Activated T-helper 1 cell treated with anti-CD3 and anti-CD28 coated beads, Interleukin-12 subunit alpha, Interleukin-12 subunit beta, Interleukin-2, Interleukin-4 antibody, amounts not matched to agents 30 ng/mL and 10 ng/mL and 1 ng/mL, durations not matched to agents 14 hours and 24 hours and 36 hours (primary cell): ENCODE measurements at regions of chr15 and their contacts with region 1.

Region 1: GRCh38 chr15:56918046-56918938 is at the start of gene TCF12:
- DNase-seq: peak; percentile 87
- H3K4me3 Mint-ChIP-seq: peak within 1 kb of the TSS; percentile 82
- H3K27ac Mint-ChIP-seq: peak within 1 kb of the TSS; percentile 63
- H3K4me1 Mint-ChIP-seq: peaks cover 39% of the 10 kb centered on the region
- H3K27me3 Mint-ChIP-seq: no peaks in the 10 kb centered on the region
- total RNA-seq, gene TCF12: 85.7 and 89.2 TPM in 2 replicates

Region 2: DNA sequence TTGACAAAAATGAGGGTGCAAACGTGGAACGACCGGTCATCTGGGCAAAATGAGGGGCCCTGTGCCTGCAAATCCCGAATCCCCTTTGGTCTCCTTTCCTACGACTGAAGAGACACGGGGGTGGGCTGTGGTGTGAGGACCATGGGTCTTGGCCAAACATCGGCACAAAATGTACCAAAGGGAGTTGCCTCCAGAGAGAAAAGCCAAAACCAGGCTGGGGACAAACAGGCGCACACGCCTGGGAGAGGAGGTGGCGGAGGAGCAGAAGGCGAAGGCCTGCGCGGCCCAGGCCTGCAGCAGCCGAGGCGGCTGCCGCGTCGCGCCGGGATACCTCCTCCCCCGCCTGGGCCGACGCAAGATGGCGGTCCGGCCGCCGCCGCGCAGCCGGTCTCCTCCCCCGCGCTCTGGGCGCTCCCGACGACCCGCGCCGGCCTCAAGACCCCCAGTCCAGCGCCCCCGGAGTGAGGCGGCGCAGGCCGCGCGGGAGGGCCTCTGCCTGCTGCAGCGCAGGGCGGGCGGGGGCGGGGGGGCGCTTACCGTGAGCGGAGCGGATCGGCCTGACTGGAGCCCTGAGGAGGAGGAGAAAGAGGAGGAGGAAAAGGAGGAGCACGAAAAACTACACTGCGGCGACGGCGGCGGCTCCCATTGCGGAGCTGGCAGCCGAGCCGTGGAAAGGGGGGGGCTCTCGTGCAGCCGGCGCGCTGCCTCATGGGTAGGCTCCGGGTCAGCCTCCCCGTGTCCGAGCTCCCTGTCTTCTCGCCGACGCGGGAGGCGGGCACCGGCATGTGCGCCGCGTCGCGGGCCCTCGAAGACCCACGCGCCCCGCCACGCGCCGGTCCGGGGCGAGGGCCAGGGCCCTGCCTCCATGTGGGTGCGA is 185.1 kb before region 1 on chr15 and contains the start of gene ZNF280D:
- intact Hi-C with region 1: loop called (anchors 1 kb)
- DNase-seq: peak; percentile 77
- H3K4me3 Mint-ChIP-seq: peak within 1 kb of the TSS; percentile 95
- H3K27ac Mint-ChIP-seq: peak within 1 kb of the TSS; percentile 99
- H3K4me1 Mint-ChIP-seq: peaks cover 47% of the 10 kb centered on the region
- H3K27me3 Mint-ChIP-seq: peaks cover 3% of the 10 kb centered on the region
- total RNA-seq, gene ZNF280D: 29.9 and 30.5 TPM in 2 replicates

Region 3: DNA sequence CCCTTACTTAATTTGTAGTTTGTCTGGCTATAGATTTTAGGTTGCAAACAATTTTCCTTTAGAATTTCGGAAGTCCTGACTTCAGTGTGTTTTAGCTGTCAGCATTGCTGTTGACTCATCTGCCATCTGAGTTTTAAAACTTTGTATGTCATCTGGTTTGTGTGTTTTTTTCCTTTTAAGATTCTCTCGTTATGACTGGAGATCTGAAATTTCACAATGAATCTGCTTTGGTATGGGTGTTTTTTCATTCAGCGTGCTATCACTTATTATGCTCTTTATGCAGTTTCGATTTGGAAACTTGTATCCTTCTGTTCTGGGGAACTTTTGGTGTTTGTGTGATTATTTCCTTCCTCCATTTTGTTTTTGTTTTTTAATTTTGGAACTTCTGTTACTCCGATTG is 131.3 kb before region 1 on chr15:
- intact Hi-C with region 1: loop called (anchors 5 kb)
- DNase-seq: no peak
- H3K4me3 Mint-ChIP-seq: peak overlapping the region; percentile 9
- H3K27ac Mint-ChIP-seq: peak overlapping the region; percentile 70
- H3K4me1 Mint-ChIP-seq: peaks cover 17% of the 10 kb centered on the region
- H3K27me3 Mint-ChIP-seq: no peaks in the 10 kb centered on the region

Region 4: DNA sequence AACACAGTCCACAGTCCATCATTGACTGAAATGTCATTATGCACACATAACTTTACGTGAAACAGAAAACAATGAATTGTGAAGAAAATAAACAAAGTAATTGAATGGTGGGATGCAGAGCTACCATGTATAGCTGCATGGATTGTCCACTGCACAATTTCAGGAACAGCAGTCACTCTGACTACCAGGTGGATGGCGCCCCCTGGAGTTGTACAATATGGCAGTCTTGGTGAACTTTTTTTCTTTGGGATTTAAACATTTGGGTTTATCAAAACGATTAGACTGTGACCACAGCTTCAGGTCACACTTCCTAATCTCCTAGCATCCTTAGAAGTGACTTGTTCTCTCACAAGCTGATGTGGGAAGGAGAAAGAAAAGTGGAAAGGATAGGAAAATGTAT is 48.7 kb before region 1 on chr15:
- intact Hi-C with region 1: no loop called
- DNase-seq: peak; percentile 8
- H3K4me3 Mint-ChIP-seq: no peak overlapping the region
- H3K27ac Mint-ChIP-seq: no peak overlapping the region
- H3K4me1 Mint-ChIP-seq: no peaks in the 10 kb centered on the region
- H3K27me3 Mint-ChIP-seq: peaks cover 12% of the 10 kb centered on the region

Region 5: GRCh38 chr15:56964182-56964581 is 45.9 kb after region 1 on chr15:
- intact Hi-C with region 1: loop called (anchors 2 kb)
- DNase-seq: no peak
- H3K4me3 Mint-ChIP-seq: no peak overlapping the region
- H3K27ac Mint-ChIP-seq: peak overlapping the region; percentile 32
- H3K4me1 Mint-ChIP-seq: peaks cover 26% of the 10 kb centered on the region
- H3K27me3 Mint-ChIP-seq: no peaks in the 10 kb centered on the region

Region 6: GRCh38 chr15:57138349-57138788 is 220.1 kb after region 1 on chr15:
- intact Hi-C with region 1: loop called (anchors 1 kb)
- DNase-seq: no peak
- H3K4me3 Mint-ChIP-seq: no peak overlapping the region
- H3K27ac Mint-ChIP-seq: no peak overlapping the region
- H3K4me1 Mint-ChIP-seq: peaks cover 31% of the 10 kb centered on the region
- H3K27me3 Mint-ChIP-seq: no peaks in the 10 kb centered on the region

Region 7: DNA sequence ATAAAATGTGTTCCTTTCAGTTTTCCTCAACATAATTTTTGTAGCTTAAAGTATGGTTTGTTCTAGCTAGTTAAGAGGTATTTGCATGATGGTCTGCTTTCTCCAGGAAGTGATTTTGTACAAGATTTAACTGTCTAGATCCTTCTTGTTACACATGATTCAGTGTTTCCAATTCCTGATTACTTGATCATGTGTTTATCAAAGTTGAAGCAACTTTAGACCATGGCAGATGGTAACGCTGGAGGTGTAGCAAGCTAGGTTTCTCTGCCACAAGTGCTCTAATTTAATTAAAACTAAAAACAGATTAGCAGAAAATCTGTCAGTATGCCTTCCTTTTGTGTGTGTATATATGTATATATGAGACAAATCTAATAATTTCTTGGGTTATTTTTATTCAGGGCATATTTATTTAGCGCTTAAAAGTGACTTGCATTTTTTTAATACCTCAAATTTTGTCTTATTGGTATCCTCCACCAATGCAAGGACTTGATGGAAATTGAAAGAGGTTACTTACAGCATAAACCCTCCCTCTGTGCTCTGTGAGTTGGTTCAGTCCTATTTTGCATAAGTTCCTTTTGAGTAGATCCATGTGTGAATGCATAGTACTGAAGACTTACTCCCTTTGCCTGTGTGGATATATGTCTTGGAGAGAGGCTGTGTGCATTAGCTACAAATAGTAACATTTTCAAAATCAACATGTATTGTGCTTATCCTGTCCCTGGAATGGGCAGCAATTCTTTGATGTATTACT is 300.7 kb after region 1 on chr15:
- intact Hi-C with region 1: loop called (anchors 5 kb)
- DNase-seq: no peak
- H3K4me3 Mint-ChIP-seq: no peak overlapping the region
- H3K27ac Mint-ChIP-seq: no peak overlapping the region
- H3K4me1 Mint-ChIP-seq: peaks cover 7% of the 10 kb centered on the region
- H3K27me3 Mint-ChIP-seq: no peaks in the 10 kb centered on the region